ENCODE measurements at regions of chr2 and their contacts with region 1.

Region 1: DNA sequence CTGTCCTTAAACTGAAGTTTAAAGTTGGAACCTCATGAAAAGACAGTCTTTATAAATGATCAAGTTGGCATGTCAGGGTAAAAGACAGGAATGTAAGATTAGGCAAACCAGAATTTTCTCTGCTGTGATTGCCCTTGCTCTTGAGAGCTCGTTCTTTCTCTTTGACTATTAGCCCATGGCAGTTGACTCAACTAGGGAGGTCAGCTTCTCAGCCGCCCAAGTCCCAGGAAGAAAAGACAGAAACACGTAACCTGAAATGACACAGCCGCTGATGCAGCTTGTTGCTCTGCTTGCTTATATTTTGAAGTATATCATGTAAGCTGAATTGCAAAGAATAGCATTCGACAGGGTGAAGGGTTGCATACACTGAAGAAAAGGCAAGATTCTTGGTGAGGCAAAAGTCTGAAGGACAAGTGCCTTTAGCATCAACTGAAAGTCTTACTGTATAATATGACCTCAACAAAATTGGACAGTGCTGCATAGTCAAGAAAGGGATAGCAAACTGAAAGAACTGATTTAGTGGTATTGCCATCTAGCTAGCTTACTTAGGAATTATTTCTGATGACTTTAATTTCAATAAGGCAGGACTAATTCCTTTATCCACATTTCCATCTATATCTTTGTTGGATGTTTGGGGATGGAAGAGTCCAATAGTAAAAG is 54.7 kb downstream of the ARHGAP15 start:
- DNase-seq: no peak
- ATAC-seq: no peak
- H3K4me3 ChIP-seq: no peak overlapping the region
- H3K4me3 Mint-ChIP-seq: peak overlapping the region; percentile 26
- H3K27ac ChIP-seq: no peak overlapping the region
- H3K27ac Mint-ChIP-seq: peak overlapping the region; percentile 68
- H3K4me1 ChIP-seq: peaks cover 4 to 12% of the 10 kb centered on the region in 2 donors
- H3K4me1 Mint-ChIP-seq: peaks cover 62% of the 10 kb centered on the region
- H3K27me3 ChIP-seq: no peaks in the 10 kb centered on the region
- H3K27me3 Mint-ChIP-seq: no peaks in the 10 kb centered on the region
- CTCF ChIP-seq: no peak

Region 2: DNA sequence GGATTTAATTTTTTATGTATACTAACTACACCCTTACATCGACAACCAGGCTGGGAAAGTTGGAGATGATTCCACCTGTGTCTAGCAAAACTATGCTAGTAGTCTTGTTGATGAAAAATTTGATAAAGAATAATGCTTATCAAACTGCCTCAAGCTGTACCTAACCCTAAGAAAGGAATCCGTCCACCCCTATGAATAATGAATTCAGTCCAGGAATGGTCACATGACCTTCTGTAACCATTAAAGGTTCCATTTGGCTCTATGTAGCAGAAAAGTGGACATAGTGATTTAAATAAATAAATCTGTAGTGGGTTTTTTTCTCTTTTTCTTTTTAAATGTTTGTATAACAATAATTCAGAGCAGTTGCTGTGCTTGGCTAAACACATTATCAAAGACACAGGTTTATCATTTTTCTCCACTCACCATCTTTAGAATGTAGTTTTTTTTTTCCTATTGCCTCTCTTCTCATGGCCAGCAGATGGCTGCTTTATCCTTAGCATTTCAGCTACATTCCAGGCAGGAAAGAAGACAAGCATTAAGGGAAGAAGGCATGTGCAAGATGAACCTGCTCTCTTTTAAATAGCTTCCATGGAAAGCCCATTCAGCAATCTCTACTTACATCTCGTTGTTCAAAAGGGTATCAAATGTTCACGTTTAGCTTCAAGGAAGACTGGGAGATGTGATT is 12.3 kb before region 1 on chr2:
- CTCF ChIA-PET with region 1: no interaction called
- POLR2A ChIA-PET with region 1: no interaction called
- intact Hi-C with region 1: no loop called
- DNase-seq: no peak
- ATAC-seq: no peak
- H3K4me3 ChIP-seq: no peak overlapping the region
- H3K4me3 Mint-ChIP-seq: no peak overlapping the region
- H3K27ac ChIP-seq: peak overlapping the region in 1 of 2 donors; percentile 42
- H3K27ac Mint-ChIP-seq: peak overlapping the region; percentile 64
- H3K4me1 ChIP-seq: peaks cover 17 to 18% of the 10 kb centered on the region in 2 donors
- H3K4me1 Mint-ChIP-seq: peaks cover 53% of the 10 kb centered on the region
- H3K27me3 ChIP-seq: no peaks in the 10 kb centered on the region
- H3K27me3 Mint-ChIP-seq: no peaks in the 10 kb centered on the region
- CTCF ChIP-seq: no peak

Region 3: DNA sequence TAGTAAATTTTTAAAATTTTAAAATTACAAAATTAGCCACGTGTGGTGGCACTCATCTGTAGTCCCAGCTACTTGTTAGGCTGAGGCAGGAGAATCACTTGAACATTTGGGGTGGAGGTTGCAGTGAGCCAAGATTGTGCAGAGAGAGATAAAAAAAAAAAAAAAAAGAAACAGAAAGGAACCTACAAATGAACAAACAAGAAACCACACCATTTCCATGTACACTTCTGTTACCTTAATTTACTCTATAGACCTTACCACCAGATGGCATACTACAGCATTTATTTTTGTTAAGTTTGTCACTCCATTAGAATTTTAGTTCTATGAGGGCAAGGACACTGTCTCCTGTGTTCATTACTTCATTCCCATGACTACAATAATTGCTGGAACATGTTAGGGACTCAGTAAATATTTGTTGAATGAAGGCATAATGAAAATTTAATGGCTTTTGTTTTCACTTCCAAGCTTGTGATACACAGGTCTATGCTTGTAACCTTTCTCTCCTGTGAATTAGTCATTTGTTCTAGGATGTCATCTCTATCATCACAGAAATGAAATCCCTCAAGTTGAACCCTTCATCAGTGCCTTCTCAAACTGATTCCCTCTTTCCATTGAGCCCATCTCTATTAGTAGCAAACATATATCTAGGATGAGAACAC is 21.3 kb after region 1 on chr2:
- CTCF ChIA-PET with region 1: interaction called, 8 read pairs
- POLR2A ChIA-PET with region 1: interaction called, 3 read pairs
- intact Hi-C with region 1: loop called (anchors 2 kb)
- DNase-seq: peak; percentile 55
- ATAC-seq: peak; percentile 39
- H3K4me3 ChIP-seq: no peak overlapping the region
- H3K4me3 Mint-ChIP-seq: no peak overlapping the region
- H3K27ac ChIP-seq: peak overlapping the region in 1 of 2 donors; percentile 50
- H3K27ac Mint-ChIP-seq: peak overlapping the region; percentile 16
- H3K4me1 ChIP-seq: peaks cover 10 to 17% of the 10 kb centered on the region in 2 donors
- H3K4me1 Mint-ChIP-seq: peaks cover 29% of the 10 kb centered on the region
- H3K27me3 ChIP-seq: no peaks in the 10 kb centered on the region
- H3K27me3 Mint-ChIP-seq: no peaks in the 10 kb centered on the region
- CTCF ChIP-seq: peak; percentile 56

Measured in B cell (primary cell).